SK-N-SH (cell line): ENCODE measurements at regions of chr10 and their contacts with region 1.

Region 1: DNA sequence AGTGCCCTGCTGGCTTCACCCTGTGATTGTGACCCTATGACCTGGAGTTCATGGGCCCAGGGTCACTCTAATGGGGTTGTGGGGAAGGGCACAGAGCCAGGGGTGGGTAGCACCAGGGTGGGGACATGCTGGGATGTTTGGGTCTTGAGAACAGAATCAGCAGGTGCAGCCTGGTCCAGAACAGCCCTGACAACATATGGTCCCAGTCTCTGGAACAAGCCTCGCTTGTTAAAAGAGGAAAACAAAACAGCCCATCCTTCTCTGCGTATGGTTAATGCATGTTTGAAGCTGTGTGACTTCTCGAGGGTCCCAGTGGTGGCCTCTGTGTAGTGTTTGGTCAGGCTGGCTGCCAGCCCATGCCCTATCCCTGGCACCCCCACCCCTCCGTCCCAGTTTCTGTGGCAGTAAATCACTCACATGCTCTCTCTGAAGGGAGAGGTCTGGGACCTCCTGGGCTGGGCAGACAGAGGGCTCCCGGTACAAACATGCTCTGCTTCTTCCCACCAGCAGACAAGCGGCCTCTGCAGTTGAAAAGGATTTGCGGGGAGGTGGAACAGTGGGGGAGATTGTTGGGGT is 79.4 kb downstream of the FAM241B start:
- DNase-seq: no peak
- H3K4me3 ChIP-seq: no peak overlapping the region
- H3K27ac ChIP-seq: no peak overlapping the region
- H3K4me1 ChIP-seq: peaks cover 0 to 11% of the 10 kb centered on the region in 2 experiments; a peak in 1 of 4 replicates
- H3K27me3 ChIP-seq: peaks cover 42% of the 10 kb centered on the region; the same call in 1 of the 2 replicates
- CTCF ChIP-seq: no peak
- EP300 ChIP-seq: no peak
- RAD21 ChIP-seq: no peak

Region 2: GRCh38 chr10:69009360-69009759 is 700.1 kb before region 1 on chr10:
- CTCF ChIA-PET with region 1: no interaction called
- POLR2A ChIA-PET with region 1: no interaction called
- DNase-seq: no peak
- H3K4me3 ChIP-seq: no peak overlapping the region
- H3K27ac ChIP-seq: no peak overlapping the region
- H3K4me1 ChIP-seq: no peaks in the 10 kb centered on the region
- H3K27me3 ChIP-seq: no peaks in the 10 kb centered on the region
- CTCF ChIP-seq: no peak
- EP300 ChIP-seq: no peak
- RAD21 ChIP-seq: no peak

Region 3: DNA sequence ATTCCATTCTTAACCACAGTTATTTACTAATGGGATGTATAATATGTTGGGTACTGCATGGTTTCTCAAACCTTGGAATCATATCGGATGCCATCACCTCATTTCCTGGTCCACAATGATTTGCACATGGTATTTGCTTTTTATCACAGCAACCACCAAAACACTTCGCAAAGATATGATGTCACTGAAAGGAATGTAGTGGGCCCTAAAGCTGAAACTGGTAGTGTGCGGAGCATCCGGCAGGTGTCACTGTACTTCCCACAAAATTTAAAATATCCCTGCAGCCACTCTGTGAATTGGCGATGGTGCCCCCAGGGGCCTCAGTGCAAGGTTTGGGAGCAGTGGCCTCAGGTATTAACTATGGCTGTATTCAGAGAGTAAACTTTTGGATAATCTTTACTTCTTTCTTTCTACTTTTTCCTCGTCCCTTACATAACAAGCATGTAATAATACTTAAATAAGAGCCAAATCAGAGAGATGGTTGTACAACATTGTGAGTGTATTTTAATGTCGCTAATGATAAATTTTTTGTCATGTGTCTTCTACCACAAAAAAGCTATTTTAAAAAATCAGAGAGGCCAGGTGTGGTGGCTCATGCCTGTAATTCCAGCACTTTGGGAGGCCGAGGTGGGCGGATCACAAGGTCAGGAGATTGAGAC is 13.3 kb before region 1 on chr10:
- CTCF ChIA-PET with region 1: interaction called, 20 read pairs
- POLR2A ChIA-PET with region 1: interaction called, 5 read pairs
- DNase-seq: no peak
- H3K4me3 ChIP-seq: no peak overlapping the region; a peak in 1 of 4 replicates
- H3K27ac ChIP-seq: no peak overlapping the region; a peak in 1 of 4 replicates
- H3K4me1 ChIP-seq: no peaks in the 10 kb centered on the region
- H3K27me3 ChIP-seq: peaks cover 3% of the 10 kb centered on the region; the same call in 1 of the 2 replicates
- CTCF ChIP-seq: peak; percentile 53
- EP300 ChIP-seq: no peak
- RAD21 ChIP-seq: peak; percentile 40